ENCODE measurements at regions of chr5 and their contacts with region 1.

Region 1: DNA sequence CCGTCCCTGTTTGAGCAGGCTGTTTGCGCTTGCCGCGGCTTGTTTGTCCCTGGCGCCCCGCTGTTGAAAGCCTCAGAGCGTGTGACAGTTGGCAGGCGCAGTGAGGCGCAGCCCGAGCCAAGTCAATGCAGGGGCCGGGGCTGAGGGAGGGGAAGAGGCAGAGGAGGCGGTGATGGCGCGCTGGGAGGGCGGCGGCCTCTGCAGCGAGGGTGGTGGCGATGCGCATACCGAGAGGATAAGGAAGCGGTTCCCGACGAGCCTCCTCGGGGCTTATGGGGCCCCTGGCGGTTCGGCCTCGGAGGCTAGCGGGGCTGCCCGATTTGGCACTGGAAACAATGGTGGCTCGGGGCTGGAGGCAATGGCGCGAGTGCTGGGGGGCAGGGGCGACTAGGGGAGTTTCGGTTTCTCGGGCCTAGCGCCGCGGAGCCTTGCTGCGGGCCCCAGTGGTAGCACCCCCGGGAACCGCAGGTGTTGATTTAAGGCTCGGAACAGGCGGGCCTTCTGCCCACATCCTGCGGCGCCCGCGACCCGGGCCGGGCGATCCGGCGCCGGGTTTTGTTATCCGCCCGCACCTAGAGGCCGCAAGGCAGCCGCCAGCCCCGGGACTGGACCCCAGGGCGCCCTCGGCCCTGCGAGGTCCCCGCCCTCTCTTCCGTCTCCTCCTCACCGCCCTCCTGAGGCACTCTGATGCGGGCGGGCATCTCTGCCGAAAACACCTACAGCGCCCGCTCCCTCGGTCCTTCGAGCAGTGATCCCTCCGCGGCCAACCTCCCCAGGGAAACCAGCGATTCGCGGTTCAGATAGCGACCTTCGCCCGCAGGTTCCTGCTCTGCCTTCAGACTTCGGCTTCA is 947 bp upstream of the LNPEP start:
- DNase-seq: peak; percentile 97
- ATAC-seq: peak; percentile 90

Region 2: GRCh38 chr5:96741891-96742309 is 193.0 kb before region 1 on chr5:
- intact Hi-C with region 1: no loop called
- DNase-seq: no peak
- ATAC-seq: peak; percentile 96

Region 3: DNA sequence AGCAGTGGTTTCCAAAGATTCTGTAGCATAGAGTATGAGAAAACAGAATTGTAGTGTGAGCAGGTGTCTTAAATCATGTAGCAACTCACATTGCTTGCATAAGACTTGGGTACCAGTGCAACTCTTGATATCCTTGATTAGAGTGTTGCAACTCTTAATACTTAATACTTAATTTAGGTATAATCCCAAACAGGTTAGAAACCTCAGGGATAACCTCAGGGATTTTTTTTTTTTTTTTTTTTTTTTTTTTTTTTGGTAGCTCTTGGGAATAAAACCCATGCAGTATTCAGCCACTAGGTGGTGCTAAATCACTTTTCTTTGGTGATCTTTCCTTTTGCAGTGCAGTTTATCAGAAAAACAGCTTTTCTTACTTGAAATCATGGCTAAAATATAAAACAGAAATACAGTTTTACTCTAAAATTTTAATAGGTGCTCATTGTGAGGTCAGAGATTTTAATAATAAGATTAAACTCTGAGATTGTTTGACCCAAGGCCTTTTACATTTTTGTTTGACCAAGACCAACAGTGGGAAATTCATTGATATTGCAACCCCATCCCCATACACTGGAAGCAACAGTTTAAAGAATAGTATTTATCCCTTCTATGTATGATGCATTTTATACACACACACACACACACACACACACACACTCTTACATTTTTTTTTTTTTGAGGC is 182.5 kb before region 1 on chr5:
- intact Hi-C with region 1: no loop called
- DNase-seq: no peak
- ATAC-seq: no peak

Region 4: GRCh38 chr5:96967400-96967799 is 32.5 kb after region 1 on chr5:
- intact Hi-C with region 1: loop called (anchors 2 kb)
- DNase-seq: no peak
- ATAC-seq: no peak

Measured in Right ventricle myocardium inferior (tissue), 1 donor.